ENCODE measurements at regions of chr4 and their contacts with region 1.

Region 1: GRCh38 chr4:107824353-107825071 is at the start of gene SGMS2:
- DNase-seq: peak; percentile 90
- ATAC-seq: peak; percentile 92
- H3K4me3 Mint-ChIP-seq: peak within 1 kb of the TSS; percentile 76
- H3K27ac Mint-ChIP-seq: peak within 1 kb of the TSS; percentile 55
- H3K4me1 Mint-ChIP-seq: peaks cover 10% of the 10 kb centered on the region
- H3K27me3 Mint-ChIP-seq: peaks cover 46% of the 10 kb centered on the region
- total RNA-seq, gene SGMS2: 0.84 to 1.8 TPM

Region 2: GRCh38 chr4:107774681-107775080 is 49.8 kb before region 1 on chr4:
- CTCF ChIA-PET with region 1: no interaction called
- POLR2A ChIA-PET with region 1: no interaction called
- intact Hi-C with region 1: no loop called
- DNase-seq: no peak
- ATAC-seq: no peak
- H3K4me3 Mint-ChIP-seq: no peak overlapping the region
- H3K27ac Mint-ChIP-seq: no peak overlapping the region
- H3K4me1 Mint-ChIP-seq: no peaks in the 10 kb centered on the region
- H3K27me3 Mint-ChIP-seq: peaks cover 17% of the 10 kb centered on the region

Region 3: GRCh38 chr4:107863850-107864371 is 39.4 kb after region 1 on chr4:
- CTCF ChIA-PET with region 1: no interaction called
- POLR2A ChIA-PET with region 1: no interaction called
- intact Hi-C with region 1: loop called in 1 of 2 experiments (anchors 2 kb)
- DNase-seq: peak; percentile 69
- ATAC-seq: peak; percentile 73
- H3K4me3 Mint-ChIP-seq: no peak overlapping the region
- H3K27ac Mint-ChIP-seq: no peak overlapping the region
- H3K4me1 Mint-ChIP-seq: peaks cover 22% of the 10 kb centered on the region
- H3K27me3 Mint-ChIP-seq: peaks cover 4% of the 10 kb centered on the region

Region 4: GRCh38 chr4:107896158-107897045 is 71.9 kb after region 1 on chr4:
- CTCF ChIA-PET with region 1: no interaction called
- POLR2A ChIA-PET with region 1: no interaction called
- intact Hi-C with region 1: loop called (anchors 5 kb)
- DNase-seq: peak; percentile 42
- ATAC-seq: peak; percentile 92
- H3K4me3 Mint-ChIP-seq: no peak overlapping the region
- H3K27ac Mint-ChIP-seq: no peak overlapping the region
- H3K4me1 Mint-ChIP-seq: peaks cover 17% of the 10 kb centered on the region
- H3K27me3 Mint-ChIP-seq: peaks cover 13% of the 10 kb centered on the region

Region 5: DNA sequence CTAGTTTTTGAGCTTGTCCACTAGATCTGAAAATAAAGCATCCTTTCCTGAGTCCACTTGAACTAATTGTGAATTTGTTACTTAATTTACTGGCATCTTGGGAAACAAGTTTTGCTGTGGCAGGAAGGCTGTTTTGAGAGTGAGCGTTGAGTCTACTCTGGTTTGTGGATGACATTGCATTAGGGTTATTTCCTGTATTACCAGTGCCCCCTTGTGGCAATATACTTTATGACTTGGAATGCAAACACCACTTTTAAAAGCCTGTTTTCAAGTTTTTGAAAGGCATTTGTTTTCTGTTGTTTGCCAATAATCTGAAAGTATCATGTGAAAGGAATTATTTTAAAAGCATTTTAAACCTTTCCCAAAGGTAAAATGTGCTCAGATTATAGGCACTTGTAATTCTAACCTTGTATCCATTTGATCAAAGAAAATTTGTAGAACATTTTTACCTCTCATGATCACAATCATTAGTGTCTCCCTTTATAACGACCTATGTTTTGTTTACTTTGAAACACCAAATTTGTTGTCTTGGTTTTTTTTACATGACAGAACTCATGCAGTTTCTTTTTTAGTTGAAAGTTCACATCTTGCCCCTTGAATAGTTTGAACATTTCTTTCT is 88.9 kb after region 1 on chr4:
- CTCF ChIA-PET with region 1: no interaction called
- POLR2A ChIA-PET with region 1: no interaction called
- intact Hi-C with region 1: loop called (anchors 1 to 2 kb)
- DNase-seq: peak; percentile 30
- ATAC-seq: peak; percentile 74
- H3K4me3 Mint-ChIP-seq: no peak overlapping the region
- H3K27ac Mint-ChIP-seq: no peak overlapping the region
- H3K4me1 Mint-ChIP-seq: peaks cover 2% of the 10 kb centered on the region
- H3K27me3 Mint-ChIP-seq: no peaks in the 10 kb centered on the region

Region 6: DNA sequence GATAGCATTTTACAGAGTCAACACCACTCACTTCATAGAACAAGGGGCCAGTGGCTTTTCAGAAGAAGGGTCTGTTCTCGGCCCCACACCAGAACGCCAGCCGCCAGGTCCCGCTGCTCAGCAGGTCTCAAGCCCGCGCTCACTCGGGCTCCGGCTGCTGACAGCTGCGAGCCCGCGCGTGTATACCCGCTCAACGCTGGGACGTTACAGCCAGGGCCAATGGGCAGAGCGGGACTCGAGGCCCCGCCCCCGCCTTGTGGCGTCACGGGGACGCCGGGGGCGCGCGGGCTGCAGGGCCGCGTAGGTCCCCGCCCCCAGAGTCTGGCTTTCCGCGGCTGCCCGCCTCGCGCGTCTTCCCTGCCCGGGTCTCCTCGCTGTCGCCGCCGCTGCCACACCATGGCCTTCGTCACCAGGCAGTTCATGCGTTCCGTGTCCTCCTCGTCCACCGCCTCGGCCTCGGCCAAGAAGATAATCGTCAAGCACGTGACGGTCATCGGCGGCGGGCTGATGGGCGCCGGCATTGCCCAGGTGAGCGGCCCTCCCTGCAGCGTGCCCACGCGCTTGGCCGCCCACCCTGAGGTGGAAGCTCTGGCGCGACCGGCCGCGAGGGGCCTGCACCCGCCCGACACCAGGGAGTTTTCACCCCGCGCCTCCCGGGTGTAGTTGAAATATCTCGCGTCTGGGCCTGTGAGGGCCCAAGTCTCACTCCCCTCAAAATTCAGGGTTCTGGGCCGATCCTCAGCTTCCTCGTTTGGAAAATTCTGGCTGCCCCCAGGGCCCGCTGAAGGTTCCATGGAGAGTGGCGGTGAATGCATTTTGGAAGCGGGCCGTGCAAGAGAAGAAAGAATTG is 165.2 kb after region 1 on chr4 and contains the start of gene HADH:
- CTCF ChIA-PET with region 1: no interaction called
- POLR2A ChIA-PET with region 1: no interaction called
- intact Hi-C with region 1: loop called in 1 of 2 experiments (anchors 5 kb)
- DNase-seq: peak; percentile 97
- ATAC-seq: peak; percentile 98
- H3K4me3 Mint-ChIP-seq: peak within 1 kb of the TSS; percentile 95
- H3K27ac Mint-ChIP-seq: peak within 1 kb of the TSS; percentile 96
- H3K4me1 Mint-ChIP-seq: peaks cover 54% of the 10 kb centered on the region
- H3K27me3 Mint-ChIP-seq: no peaks in the 10 kb centered on the region
- total RNA-seq, gene HADH: 58.4 to 60.8 TPM